Calu3 (cell line): ENCODE measurements at regions of chr6 and their contacts with region 1.

Region 1: GRCh38 chr6:16761471-16762267 is 409 bp upstream of the ATXN1 start:
- DNase-seq: peak; percentile 86
- H3K4me3 Mint-ChIP-seq: peak overlapping the region; percentile 83
- H3K27ac Mint-ChIP-seq: peak overlapping the region; percentile 85
- H3K4me1 Mint-ChIP-seq: peaks cover 12% of the 10 kb centered on the region
- H3K27me3 Mint-ChIP-seq: no peaks in the 10 kb centered on the region
- CTCF ChIP-seq: no peak

Region 2: DNA sequence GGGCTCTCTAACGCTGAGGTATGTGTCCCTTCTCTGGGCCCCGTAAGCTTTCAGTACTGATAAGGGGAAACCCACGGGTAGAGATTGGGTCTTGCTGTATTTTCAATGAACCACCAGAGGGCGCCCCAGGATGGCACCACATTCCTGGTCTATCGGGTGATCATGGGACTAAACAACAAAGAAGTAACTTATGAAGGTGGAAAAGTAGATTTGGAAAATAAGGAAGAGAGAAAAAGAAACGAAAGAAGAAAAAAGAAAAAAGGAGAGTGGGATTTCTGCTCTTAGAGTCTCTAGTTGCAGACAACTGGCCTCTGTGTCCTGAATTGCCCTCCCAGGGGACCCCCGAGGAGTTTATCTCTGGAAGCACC is 429.5 kb before region 1 on chr6:
- CTCF ChIA-PET with region 1: no interaction called
- intact Hi-C with region 1: loop called (anchors 1 kb)
- DNase-seq: peak; percentile 72
- H3K4me3 Mint-ChIP-seq: no peak overlapping the region
- H3K27ac Mint-ChIP-seq: no peak overlapping the region
- H3K4me1 Mint-ChIP-seq: no peaks in the 10 kb centered on the region
- H3K27me3 Mint-ChIP-seq: no peaks in the 10 kb centered on the region
- CTCF ChIP-seq: peak; percentile 54

Region 3: GRCh38 chr6:16514249-16514648 is 247.4 kb before region 1 on chr6:
- CTCF ChIA-PET with region 1: interaction called, 5 read pairs
- intact Hi-C with region 1: loop called (anchors 5 kb)
- DNase-seq: peak; percentile 6
- H3K4me3 Mint-ChIP-seq: no peak overlapping the region
- H3K27ac Mint-ChIP-seq: no peak overlapping the region
- H3K4me1 Mint-ChIP-seq: peaks cover 30% of the 10 kb centered on the region
- H3K27me3 Mint-ChIP-seq: no peaks in the 10 kb centered on the region
- CTCF ChIP-seq: peak; percentile 47

Region 4: DNA sequence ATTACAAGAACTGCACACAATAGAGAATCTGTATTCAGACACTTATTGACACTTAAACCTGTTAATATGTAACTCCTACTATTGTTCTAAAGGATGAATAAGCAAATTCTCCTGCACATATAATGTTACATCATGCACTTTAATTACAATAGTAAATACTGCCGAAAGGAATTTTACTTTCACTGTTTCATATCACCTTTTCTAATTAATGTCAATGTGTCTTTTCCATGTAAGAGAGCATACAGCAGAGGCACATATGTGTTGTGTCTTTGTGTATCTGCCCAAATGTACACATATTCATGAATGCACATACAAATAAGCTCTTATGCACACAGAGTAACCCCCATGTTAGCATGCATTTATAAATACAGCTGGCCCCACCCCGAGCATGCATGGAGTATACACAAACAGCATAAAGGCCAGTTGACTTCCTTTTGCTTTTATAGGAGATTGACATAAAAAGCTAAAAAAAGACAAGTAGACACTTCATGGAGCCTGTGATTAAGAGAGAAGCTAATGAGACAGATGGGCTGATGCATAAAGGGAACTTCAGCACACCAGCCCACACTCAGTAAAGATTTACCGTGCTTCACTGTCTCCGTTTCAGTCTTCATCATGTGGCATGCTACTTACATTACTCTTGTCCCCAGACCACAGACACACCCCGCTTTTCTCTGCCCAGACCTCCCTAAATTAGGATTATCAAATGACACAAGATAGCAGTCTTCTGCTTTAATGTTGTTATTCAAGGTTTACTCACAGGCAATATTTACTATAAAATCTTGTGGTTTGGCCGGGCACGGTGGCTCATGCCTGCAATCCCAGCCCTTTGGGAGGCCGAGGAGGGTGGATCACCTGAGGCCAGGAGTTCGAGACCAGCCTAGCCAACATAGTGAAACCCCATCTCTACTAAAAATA is 185.0 kb before region 1 on chr6:
- CTCF ChIA-PET with region 1: interaction called, 3 read pairs
- intact Hi-C with region 1: loop called (anchors 5 kb)
- DNase-seq: peak; percentile 4
- H3K4me3 Mint-ChIP-seq: peak overlapping the region; percentile 55
- H3K27ac Mint-ChIP-seq: peak overlapping the region; percentile 88
- H3K4me1 Mint-ChIP-seq: peaks cover 14% of the 10 kb centered on the region
- H3K27me3 Mint-ChIP-seq: no peaks in the 10 kb centered on the region
- CTCF ChIP-seq: no peak

Region 5: GRCh38 chr6:16712931-16713484 is 48.7 kb before region 1 on chr6:
- CTCF ChIA-PET with region 1: interaction called, 3 read pairs
- intact Hi-C with region 1: loop called (anchors 2 kb)
- DNase-seq: peak; percentile 36
- H3K4me3 Mint-ChIP-seq: peak overlapping the region; percentile 62
- H3K27ac Mint-ChIP-seq: peak overlapping the region; percentile 90
- H3K4me1 Mint-ChIP-seq: peaks cover 22% of the 10 kb centered on the region
- H3K27me3 Mint-ChIP-seq: no peaks in the 10 kb centered on the region
- CTCF ChIP-seq: no peak

Region 6: GRCh38 chr6:16825784-16826183 is 64.1 kb after region 1 on chr6:
- CTCF ChIA-PET with region 1: no interaction called
- intact Hi-C with region 1: no loop called
- DNase-seq: no peak
- H3K4me3 Mint-ChIP-seq: no peak overlapping the region
- H3K27ac Mint-ChIP-seq: no peak overlapping the region
- H3K4me1 Mint-ChIP-seq: peaks cover 10% of the 10 kb centered on the region
- H3K27me3 Mint-ChIP-seq: no peaks in the 10 kb centered on the region
- CTCF ChIP-seq: no peak

Region 7: DNA sequence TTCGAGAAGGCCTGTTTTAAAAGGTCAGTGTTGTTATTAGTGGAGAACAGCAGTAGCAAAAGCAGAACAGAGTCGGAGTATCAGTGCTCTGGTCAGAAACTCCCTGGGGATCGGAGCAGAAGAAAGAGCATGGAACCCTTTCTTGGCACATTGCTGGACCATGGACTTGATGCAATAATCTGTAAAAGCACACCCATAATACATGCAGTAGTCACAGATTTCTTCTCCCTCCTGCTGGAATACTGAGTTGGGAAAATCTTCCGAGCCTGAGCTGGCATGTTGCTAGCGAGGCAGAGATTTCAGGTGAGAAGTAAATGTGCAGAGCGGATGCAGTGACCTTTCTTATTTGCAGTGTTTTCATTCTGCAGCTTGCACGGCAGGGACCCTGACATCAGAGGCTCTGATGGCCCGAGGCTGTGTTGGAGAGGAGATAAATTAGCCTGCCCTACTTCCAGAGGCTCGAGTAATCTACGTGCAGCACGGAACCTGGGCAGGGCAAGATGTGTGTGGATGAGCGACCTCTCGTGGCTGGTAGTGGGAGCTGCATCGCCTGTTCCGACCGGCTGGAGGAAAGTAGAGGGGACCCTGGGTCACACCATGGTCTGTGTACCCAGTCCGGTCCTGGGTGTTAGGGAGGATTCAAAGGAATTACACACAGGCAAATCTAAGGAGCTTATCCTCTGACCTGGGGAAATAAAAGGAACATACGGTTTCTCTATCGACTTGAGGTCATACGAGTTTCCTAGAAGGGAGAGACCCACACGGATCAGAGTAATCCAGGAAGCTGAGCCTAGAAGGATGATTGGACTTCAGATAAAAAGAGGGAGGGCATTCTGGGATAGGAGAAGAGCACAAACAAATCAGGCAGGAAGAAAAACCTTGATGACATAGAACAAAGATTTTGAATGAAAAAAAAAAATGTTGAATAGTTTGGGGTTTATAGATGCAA is 203.2 kb after region 1 on chr6:
- CTCF ChIA-PET with region 1: interaction called, 3 read pairs
- intact Hi-C with region 1: loop called (anchors 1 kb)
- DNase-seq: peak; percentile 66
- H3K4me3 Mint-ChIP-seq: peak overlapping the region; percentile 24
- H3K27ac Mint-ChIP-seq: no peak overlapping the region
- H3K4me1 Mint-ChIP-seq: peaks cover 12% of the 10 kb centered on the region
- H3K27me3 Mint-ChIP-seq: peaks cover 9% of the 10 kb centered on the region
- CTCF ChIP-seq: peak; percentile 75

Region 8: DNA sequence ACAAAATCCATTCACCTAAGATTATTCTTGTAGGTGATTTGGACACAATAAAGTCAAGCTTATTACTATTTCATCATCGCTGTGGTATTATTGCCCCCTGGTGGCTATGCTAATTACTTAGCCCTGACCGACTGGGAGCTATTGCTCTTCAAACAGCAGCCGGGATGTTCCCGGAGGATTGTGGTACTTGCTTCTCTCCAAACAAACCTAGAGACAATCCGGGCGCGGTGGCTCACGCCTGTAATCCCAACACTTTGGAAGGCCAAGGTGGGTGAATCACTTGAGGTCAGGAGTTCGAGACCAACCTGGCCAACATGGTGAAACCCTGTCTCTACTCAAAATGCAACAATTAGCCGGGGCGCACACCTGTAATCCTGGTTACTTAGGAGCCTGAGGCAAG is 324.8 kb after region 1 on chr6:
- CTCF ChIA-PET with region 1: interaction called, 16 read pairs
- intact Hi-C with region 1: loop called (anchors 1 kb)
- DNase-seq: peak; percentile 66
- H3K4me3 Mint-ChIP-seq: no peak overlapping the region
- H3K27ac Mint-ChIP-seq: no peak overlapping the region
- H3K4me1 Mint-ChIP-seq: no peaks in the 10 kb centered on the region
- H3K27me3 Mint-ChIP-seq: peaks cover under 1% of the 10 kb centered on the region
- CTCF ChIP-seq: peak; percentile 55